ENCODE measurements at regions of chr5 and their contacts with region 1.

Region 1: GRCh38 chr5:107673368-107674136 is 2.8 kb upstream of the EFNA5 start:
- DNase-seq: peak; percentile 98
- ATAC-seq: peak; percentile 45
- H3K4me3 ChIP-seq: peak overlapping the region; percentile 83
- H3K27ac ChIP-seq: peak overlapping the region; percentile 69
- H3K4me1 ChIP-seq: peaks cover 24% of the 10 kb centered on the region
- H3K27me3 ChIP-seq: peaks cover 12% of the 10 kb centered on the region; the same call in 1 of the 2 replicates
- CTCF ChIP-seq: peak; percentile 99

Region 2: DNA sequence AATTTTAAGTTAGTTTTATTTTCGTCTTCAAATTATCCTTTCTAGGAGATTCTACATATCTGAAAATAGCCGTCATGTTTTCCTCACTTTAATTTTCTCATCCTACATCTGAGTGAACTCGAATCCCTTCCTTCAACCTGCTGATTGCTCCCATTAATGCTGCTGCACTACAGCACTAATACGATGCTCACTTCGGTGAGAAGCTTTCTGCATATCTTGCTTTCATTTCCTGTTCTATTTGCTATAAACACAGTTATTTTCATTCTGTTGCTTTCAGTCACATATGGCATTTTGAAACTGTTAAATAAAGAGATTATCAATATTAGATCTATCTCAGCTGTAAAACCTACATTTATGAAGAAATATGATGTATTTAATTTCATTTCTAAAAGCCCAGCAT is 752.0 kb before region 1 on chr5:
- CTCF ChIA-PET with region 1: no interaction called
- POLR2A ChIA-PET with region 1: no interaction called
- intact Hi-C with region 1: loop called (anchors 10 kb)
- DNase-seq: no peak
- ATAC-seq: no peak
- H3K4me3 ChIP-seq: no peak overlapping the region
- H3K27ac ChIP-seq: no peak overlapping the region
- H3K4me1 ChIP-seq: 0 out of 2 replicates have a peak, but pooled peaks cover 4% of the 10 kb centered on the region
- H3K27me3 ChIP-seq: no peaks in the 10 kb centered on the region
- CTCF ChIP-seq: no peak

Region 3: GRCh38 chr5:107135391-107135790 is 538.2 kb before region 1 on chr5:
- CTCF ChIA-PET with region 1: no interaction called
- POLR2A ChIA-PET with region 1: no interaction called
- intact Hi-C with region 1: loop called (anchors 2 kb)
- DNase-seq: peak; percentile 58
- ATAC-seq: peak; percentile 58
- H3K4me3 ChIP-seq: no peak overlapping the region
- H3K27ac ChIP-seq: peak overlapping the region; percentile 26
- H3K4me1 ChIP-seq: peaks cover 11% of the 10 kb centered on the region
- H3K27me3 ChIP-seq: no peaks in the 10 kb centered on the region
- CTCF ChIP-seq: no peak

Region 4: DNA sequence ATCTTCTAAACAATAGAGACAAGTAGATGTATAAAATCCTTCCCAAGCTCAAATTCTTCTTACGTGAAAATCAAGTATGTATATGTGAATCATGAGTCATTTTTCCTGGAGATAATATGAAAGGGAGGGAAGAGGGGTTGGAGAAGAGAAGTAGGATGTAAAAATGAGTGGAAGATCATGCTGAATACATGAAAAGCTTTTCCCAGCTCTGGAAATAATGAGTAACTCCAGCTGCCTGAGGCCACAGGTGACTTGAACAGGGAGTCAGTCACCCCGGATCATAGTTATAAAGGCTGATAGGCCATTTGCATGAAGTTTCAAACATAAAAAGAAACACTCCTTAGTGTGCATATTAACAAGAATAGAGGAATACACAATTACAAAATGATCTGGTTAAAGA is 489.5 kb before region 1 on chr5:
- CTCF ChIA-PET with region 1: no interaction called
- POLR2A ChIA-PET with region 1: no interaction called
- intact Hi-C with region 1: no loop called
- DNase-seq: peak; percentile 1
- ATAC-seq: no peak
- H3K4me3 ChIP-seq: no peak overlapping the region
- H3K27ac ChIP-seq: no peak overlapping the region
- H3K4me1 ChIP-seq: no peaks in the 10 kb centered on the region
- H3K27me3 ChIP-seq: no peaks in the 10 kb centered on the region
- CTCF ChIP-seq: no peak

Region 5: DNA sequence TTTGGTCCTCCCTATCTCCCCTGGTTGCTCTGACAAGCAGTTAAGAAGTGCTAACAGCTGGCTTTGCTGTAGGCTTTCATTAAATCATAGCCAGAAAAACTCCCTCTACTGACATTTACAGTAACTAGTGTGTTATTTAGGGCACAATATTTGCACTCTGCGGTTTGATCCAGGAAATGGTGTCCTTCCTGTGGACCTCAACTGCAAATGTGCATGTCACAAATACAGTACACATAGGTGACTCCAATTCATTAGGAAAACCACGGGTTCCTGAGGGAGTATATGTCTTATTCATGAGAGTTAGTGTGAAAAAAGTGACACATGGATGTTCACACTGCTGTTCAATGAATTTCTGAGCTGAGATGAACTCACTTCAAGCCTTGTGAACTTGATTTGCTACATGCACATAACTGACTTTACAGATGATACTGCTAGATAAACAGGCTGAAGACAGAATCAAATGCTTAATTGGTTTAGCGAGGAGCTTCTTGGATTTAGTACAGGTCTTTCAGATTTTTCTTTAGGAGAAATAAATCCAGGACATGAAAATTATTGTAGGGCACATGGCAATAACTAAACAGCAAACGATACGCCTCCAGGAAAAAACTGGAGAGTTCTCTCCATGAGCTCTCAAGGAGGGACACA is 284.3 kb before region 1 on chr5:
- CTCF ChIA-PET with region 1: no interaction called
- POLR2A ChIA-PET with region 1: no interaction called
- intact Hi-C with region 1: loop called (anchors 2 kb)
- DNase-seq: peak; percentile 87
- ATAC-seq: peak; percentile 86
- H3K4me3 ChIP-seq: peak overlapping the region; percentile 44; the same call in 1 of the 2 replicates
- H3K27ac ChIP-seq: peak overlapping the region; percentile 92
- H3K4me1 ChIP-seq: peaks cover 40% of the 10 kb centered on the region
- H3K27me3 ChIP-seq: no peaks in the 10 kb centered on the region
- CTCF ChIP-seq: peak; percentile 32; the same call in 1 of the 2 replicates

Region 6: DNA sequence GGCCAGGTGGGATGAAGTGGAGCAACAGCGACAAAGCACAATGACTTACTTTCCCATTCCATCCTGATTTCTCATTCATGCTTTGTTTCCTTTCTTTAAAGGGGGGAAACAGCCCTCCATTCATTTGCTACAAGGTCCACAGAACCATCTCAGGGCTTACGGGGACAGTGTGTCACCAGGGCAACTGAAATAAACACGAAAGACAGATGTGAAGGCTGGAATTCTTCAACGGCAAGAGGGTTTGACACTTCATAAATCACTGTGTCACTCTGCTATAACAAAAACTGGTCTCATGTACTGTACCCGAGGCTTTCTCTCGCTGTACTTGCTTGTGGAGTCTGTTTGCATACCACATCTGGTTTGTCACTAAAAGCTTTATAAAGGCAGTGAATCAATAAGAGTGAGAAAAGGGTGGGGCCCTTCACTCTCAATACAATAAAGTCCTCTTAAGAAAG is 153.6 kb before region 1 on chr5:
- CTCF ChIA-PET with region 1: no interaction called
- POLR2A ChIA-PET with region 1: no interaction called
- intact Hi-C with region 1: loop called (anchors 5 kb)
- DNase-seq: peak; percentile 64
- ATAC-seq: peak; percentile 66
- H3K4me3 ChIP-seq: peak overlapping the region; percentile 49
- H3K27ac ChIP-seq: peak overlapping the region; percentile 61
- H3K4me1 ChIP-seq: peaks cover 52% of the 10 kb centered on the region
- H3K27me3 ChIP-seq: no peaks in the 10 kb centered on the region
- CTCF ChIP-seq: no peak

Region 7: DNA sequence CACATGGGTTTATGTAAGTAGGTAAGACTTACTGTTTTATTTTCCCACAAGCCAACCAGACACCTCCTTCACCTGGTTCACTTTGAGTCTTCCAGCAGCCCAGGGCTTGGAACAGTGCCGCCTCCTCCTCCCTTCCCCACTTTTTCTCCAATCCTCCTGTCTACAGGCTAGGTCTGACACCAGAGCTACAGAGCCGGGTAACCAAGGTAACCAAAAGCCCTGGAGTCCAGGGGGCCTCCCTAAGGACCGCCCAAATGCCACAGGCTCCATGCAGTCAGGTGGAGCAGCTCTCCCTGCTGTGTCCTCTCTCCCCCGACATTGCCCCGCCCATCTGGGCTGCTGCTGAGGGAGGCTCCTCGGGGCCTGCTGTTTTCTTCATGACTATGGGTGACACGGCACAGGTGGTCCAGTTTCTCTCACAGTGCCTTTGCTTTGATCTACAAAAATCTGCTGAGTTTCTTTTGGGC is 135.2 kb after region 1 on chr5:
- CTCF ChIA-PET with region 1: no interaction called
- POLR2A ChIA-PET with region 1: no interaction called
- intact Hi-C with region 1: loop called (anchors 5 kb)
- DNase-seq: no peak
- ATAC-seq: no peak
- H3K4me3 ChIP-seq: no peak overlapping the region
- H3K27ac ChIP-seq: no peak overlapping the region
- H3K4me1 ChIP-seq: peaks cover 22% of the 10 kb centered on the region
- H3K27me3 ChIP-seq: no peaks in the 10 kb centered on the region
- CTCF ChIP-seq: no peak

Region 8: GRCh38 chr5:108345541-108346171 is 672.1 kb after region 1 on chr5:
- CTCF ChIA-PET with region 1: interaction called, 3 read pairs
- POLR2A ChIA-PET with region 1: no interaction called
- intact Hi-C with region 1: loop called (anchors 5 kb)
- DNase-seq: peak; percentile 77
- ATAC-seq: peak; percentile 88
- H3K4me3 ChIP-seq: no peak overlapping the region
- H3K27ac ChIP-seq: no peak overlapping the region
- H3K4me1 ChIP-seq: no peaks in the 10 kb centered on the region
- H3K27me3 ChIP-seq: no peaks in the 10 kb centered on the region
- CTCF ChIP-seq: peak; percentile 87

Measured in PC-3 (cell line).